RWPE1 (cell line): ENCODE measurements at regions of chr14 and their contacts with region 1.

Region 1: DNA sequence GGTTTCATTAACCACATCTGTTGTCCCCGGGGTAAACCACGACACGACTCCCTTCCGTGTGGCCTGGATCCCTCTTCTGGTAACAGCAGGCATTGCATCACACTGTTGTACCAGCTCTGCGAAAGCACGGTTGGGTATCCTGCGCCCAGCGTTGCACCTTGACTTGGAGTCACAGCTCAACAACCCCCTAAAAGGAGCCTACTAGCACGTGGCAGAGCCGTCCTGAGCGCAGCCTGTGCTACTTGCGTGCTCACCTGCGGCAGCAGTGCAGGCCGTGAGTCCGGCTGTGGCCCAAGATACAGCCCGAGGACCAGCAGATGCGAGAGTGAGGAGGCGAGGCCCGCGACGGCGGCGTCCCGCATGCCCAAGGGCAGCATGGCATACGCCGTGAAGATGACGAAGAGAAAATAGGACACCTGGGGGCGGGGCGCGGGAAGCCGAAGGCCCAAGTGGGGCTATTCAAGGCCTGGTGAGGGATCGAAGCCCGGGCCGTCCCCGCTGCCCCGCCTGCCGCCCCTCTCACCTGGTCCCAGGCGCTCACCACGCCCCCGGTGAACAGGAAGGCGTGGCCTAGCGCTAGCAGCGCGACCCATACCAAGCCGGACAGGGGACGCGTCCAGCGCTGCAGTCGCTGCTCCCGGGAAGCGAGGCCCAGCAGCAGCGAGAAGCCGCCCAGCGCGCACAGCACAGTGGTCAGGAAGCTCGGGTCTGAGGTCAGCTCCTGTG is 2.4 kb downstream of the ADCY4 start:
- DNase-seq: peak; percentile 77
- H3K27ac ChIP-seq: no peak overlapping the region
- CTCF ChIP-seq: peak; percentile 85

Region 2: GRCh38 chr14:24262821-24263761 is 69.3 kb before region 1 on chr14 and contains the start of gene TGM1:
- CTCF ChIA-PET with region 1: no interaction called
- POLR2A ChIA-PET with region 1: no interaction called
- DNase-seq: peak; percentile 30
- H3K27ac ChIP-seq: peak within 1 kb of the TSS; percentile 96
- CTCF ChIP-seq: no peak

Region 3: GRCh38 chr14:24307575-24308341 is 24.7 kb before region 1 on chr14 and contains the start of gene CIDEB:
- CTCF ChIA-PET with region 1: interaction called, 12 read pairs
- POLR2A ChIA-PET with region 1: no interaction called
- DNase-seq: peak; percentile 63
- H3K27ac ChIP-seq: peak within 1 kb of the TSS; percentile 98
- CTCF ChIP-seq: peak; percentile 93

Region 4: DNA sequence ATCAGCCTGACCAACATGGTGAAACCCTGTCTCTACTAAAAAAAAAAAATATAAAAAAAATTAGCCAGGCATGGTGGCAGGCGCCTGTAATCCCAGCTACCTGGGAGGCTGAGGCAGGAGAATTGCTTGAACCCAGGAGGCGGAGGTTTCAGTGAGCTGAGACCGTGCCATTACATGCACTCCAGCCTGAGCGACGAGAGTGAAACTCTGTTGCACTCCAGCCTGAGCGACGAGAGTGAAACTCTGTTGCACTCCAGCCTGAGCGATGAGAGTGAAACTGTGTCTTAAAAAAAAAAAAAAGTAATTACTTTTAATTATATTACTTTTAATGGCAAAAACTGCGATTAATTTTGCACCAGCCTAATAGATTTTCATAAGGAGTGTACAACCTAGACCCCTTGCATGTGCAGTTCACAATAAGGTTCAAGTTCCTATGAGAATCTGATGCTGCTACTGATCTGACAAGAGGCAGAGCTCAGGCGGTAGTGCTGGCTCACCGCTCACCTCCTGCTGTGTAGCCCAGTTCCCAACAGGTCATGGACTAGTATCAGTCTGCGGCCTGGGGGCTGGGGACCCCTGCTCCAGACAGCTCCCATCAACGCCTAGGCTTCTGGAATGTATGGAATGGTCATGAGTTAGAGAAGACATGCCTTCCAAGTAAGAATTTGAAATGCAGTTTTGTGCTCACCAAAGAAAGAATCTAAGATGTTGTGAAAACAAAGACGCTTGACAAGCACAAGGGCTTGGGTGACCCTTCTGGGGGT is 11.0 kb before region 1 on chr14:
- CTCF ChIA-PET with region 1: interaction called, 10 read pairs
- POLR2A ChIA-PET with region 1: no interaction called
- DNase-seq: no peak
- H3K27ac ChIP-seq: no peak overlapping the region
- CTCF ChIP-seq: no peak

Region 5: DNA sequence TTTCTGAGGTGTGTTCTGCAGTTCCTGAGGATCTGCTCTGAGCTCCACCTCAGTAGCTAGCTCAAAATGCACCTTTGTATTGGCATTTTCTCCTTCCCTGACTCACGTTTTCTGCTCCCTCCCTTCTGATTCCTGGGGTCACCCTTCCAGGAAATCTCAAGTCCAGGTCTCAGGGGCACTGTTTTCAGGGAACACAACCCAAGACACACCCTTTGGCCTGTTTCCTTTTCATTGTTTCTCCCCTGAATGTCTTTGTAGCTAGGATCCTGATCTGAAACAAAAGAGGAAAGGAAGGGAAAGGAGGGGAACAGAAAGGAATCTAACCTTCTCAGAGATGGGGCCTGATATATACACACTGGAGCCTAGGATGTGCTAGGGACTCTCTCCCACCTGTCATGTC is 14.7 kb after region 1 on chr14:
- CTCF ChIA-PET with region 1: interaction called, 10 read pairs
- POLR2A ChIA-PET with region 1: no interaction called
- DNase-seq: no peak
- H3K27ac ChIP-seq: no peak overlapping the region
- CTCF ChIP-seq: no peak

Region 6: GRCh38 chr14:24366721-24367513 is 34.5 kb after region 1 on chr14:
- CTCF ChIA-PET with region 1: interaction called, 11 read pairs
- POLR2A ChIA-PET with region 1: no interaction called
- DNase-seq: no peak
- H3K27ac ChIP-seq: peak overlapping the region; percentile 47; the same call in 1 of the 2 replicates
- CTCF ChIP-seq: no peak

Region 7: GRCh38 chr14:24408764-24409163 is 76.3 kb after region 1 on chr14:
- CTCF ChIA-PET with region 1: interaction called, 16 read pairs
- POLR2A ChIA-PET with region 1: no interaction called
- DNase-seq: no peak
- H3K27ac ChIP-seq: no peak overlapping the region
- CTCF ChIP-seq: no peak

Region 8: GRCh38 chr14:24431569-24432258 is 99.3 kb after region 1 on chr14:
- CTCF ChIA-PET with region 1: interaction called, 94 read pairs
- POLR2A ChIA-PET with region 1: interaction called, 11 read pairs
- DNase-seq: peak; percentile 87
- H3K27ac ChIP-seq: peak overlapping the region; percentile 91
- CTCF ChIP-seq: peak; percentile 93